GM13976 (cell line): ENCODE measurements at regions of chr3 and their contacts with region 1.

Region 1: GRCh38 chr3:129633751-129634392 is 27.4 kb upstream of the PLXND1 start:
- DNase-seq: no peak
- CTCF ChIP-seq: no peak

Region 2: DNA sequence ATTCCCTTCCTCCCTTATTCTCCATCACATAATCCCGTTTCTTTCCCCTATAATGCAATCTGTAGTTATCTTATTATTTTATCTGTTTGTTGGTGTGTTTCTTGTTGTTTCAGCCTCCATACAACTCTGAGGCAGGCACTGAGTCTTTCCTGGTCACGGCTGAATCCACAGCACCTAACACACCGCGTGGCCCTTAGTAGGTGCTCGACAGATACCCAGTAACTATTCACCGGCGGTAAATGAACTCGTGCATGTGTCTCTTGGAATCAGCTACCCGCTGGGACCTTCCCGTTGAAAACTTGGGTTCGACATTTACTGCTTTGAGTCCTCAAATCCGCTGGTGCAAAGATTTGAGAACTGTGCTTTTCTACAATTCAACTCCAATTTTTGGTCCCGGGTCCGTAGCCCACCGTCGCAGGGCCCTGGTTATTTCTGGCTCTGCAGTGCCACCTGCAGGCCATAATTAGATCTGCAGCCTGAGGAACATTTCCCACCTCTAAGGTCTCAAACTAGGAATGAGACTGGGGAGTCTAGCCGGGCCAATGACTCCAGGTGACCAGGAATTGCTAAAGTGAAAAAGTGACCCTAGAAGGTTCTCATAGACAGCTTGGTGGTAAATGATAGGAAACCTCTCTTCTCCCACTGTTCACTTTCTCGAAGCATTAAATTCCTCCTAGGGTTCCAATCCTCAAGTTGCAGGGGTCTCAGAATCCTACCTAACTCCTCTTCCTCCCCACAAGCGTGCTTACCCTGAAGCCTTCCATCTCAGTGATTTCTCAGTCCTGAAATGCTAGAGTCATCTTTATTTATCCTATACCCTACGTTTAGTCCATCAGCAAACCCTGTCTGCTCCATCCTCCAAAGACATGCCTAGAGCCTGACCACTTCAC is 300.6 kb after region 1 on chr3:
- in situ Hi-C with region 1: loop called (anchors 10 kb)
- DNase-seq: peak; percentile 64
- CTCF ChIP-seq: peak; percentile 89